GM10248 (cell line): ENCODE measurements at regions of chr18 and their contacts with region 1.

Region 1: DNA sequence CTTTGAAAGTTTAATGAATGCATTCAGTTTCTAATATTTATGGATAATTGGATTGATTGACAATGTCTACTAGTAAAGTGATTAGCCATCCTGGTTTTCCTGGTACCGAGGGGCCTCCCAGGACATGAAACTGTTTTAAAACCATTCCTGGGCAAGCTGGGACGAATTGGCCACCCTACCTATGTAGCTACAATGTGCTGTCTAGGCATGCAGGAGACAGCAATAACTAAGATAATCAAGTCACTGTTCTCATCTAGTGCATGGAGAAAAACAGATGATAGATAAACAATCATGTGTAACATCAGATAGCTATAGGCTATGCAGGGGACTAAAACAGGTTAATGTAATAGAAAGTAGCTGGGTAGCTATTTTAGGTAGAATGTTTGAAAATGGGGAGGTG is 67.1 kb downstream of the PMAIP1 start:
- DNase-seq: no peak
- CTCF ChIP-seq: no peak

Region 2: DNA sequence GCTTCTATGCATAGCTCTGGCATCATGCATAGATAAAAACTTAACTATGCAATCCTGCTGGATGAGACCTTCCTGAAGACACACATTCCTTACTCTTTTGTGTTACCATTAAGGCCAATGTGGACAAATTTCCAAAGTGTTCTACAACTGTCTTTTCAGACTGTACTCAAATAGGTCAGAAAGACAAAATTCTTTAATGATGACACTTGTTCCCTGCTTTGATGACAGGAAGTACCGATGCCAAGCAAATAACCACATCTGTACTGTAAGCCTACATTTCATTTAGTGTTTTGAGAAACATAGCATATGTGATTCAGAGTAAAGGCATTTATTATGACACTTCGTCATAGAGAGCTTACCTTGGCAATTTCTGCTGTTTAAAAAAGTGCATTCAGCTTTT is 12.2 kb before region 1 on chr18:
- CTCF ChIA-PET with region 1: interaction called, 26 read pairs
- POLR2A ChIA-PET with region 1: interaction called, 4 read pairs
- DNase-seq: no peak
- CTCF ChIP-seq: no peak

Region 3: DNA sequence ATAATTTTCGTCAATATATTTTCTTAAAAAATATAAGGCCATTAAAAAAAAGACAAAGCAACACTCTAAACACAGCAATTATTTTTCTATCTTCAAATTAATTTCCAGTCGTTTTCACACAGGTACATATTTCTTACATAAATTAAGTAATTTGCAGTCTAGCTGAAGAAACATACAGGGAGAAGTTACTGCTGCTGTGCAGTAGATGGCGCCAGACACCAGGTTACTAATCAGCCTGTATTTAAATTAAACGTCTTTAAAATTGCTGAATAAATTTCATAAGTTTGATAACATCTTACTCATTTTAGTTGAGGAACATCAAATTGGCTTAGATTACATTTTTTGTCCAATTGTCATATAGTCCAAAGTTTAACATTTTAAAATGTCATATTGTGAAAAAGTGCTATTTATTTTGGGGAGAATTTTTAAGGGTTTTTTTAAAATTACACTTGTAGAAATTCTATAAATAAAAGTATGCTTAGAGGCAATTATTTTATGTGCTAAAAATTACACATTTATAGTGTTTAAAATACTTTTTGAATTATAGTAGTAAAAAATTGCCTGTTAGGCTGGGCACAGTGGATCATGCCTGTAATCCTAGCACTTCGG is 21.3 kb after region 1 on chr18:
- CTCF ChIA-PET with region 1: interaction called, 16 read pairs
- POLR2A ChIA-PET with region 1: no interaction called
- DNase-seq: peak; percentile 47
- CTCF ChIP-seq: peak; percentile 88

Region 4: GRCh38 chr18:60040971-60041370 is 74.1 kb after region 1 on chr18:
- CTCF ChIA-PET with region 1: no interaction called
- POLR2A ChIA-PET with region 1: no interaction called
- DNase-seq: no peak
- CTCF ChIP-seq: no peak